A549 (cell line): ENCODE measurements at regions of chr9 and their contacts with region 1.

Region 1: GRCh38 chr9:136820971-136821825 is 13.4 kb downstream of the RABL6 start:
- DNase-seq: no peak
- ATAC-seq: no peak
- H3K4me3 ChIP-seq: no peak overlapping the region
- H3K27ac ChIP-seq: no peak overlapping the region
- H3K4me1 ChIP-seq: no peaks in the 10 kb centered on the region
- CTCF ChIP-seq: no peak
- EP300 ChIP-seq: no peak
- POLR2A ChIP-seq: no peak
- RAD21 ChIP-seq: no peak

Region 2: GRCh38 chr9:135726138-135726853 is 1094.9 kb before region 1 on chr9:
- CTCF ChIA-PET with region 1: no interaction called
- POLR2A ChIA-PET with region 1: no interaction called
- DNase-seq: no peak
- ATAC-seq: peak in 1 of 2 experiments; percentile 24; a peak in 1 of 6 replicates
- H3K4me3 ChIP-seq: no peak overlapping the region
- H3K27ac ChIP-seq: peak overlapping the region in 1 of 2 experiments; percentile 74; a peak in 3 of 6 replicates
- H3K4me1 ChIP-seq: peaks cover 12% of the 10 kb centered on the region; the same call in 1 of the 3 replicates
- CTCF ChIP-seq: no peak
- EP300 ChIP-seq: no peak
- POLR2A ChIP-seq: no peak
- RAD21 ChIP-seq: no peak

Region 3: DNA sequence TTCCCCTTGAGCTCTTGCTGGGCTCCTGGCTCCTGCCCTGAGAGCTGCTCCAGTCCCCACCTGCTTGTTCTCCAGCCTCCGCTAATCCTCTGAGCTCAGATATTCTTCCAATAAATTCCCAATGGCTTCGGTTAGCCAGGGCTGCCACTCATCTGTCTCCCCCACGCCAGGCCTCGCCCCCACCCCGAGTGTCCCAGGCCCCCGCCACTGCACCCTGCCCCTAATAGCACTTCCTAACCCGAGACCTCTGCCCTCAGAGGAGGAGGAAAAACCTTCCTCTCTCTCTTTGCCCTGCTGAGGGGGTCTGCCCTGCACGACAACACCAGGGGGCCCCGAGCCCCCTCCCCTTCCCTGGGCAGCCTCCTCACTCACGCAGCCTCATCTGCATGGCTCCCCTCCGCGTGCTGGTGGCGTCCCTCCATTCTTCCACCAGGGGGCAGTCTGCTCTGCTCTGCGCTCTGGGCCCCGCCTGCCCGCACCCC is 51.4 kb before region 1 on chr9:
- CTCF ChIA-PET with region 1: no interaction called
- POLR2A ChIA-PET with region 1: no interaction called
- DNase-seq: peak; percentile 58 to 72
- ATAC-seq: peak; percentile 87 to 89
- H3K4me3 ChIP-seq: peak overlapping the region; percentile 31
- H3K27ac ChIP-seq: peak overlapping the region; percentile 54 to 85; a peak in 5 of 6 replicates
- H3K4me1 ChIP-seq: 0 out of 3 replicates have a peak, but pooled peaks cover 8% of the 10 kb centered on the region
- CTCF ChIP-seq: peak; percentile 56
- EP300 ChIP-seq: no peak
- POLR2A ChIP-seq: no peak
- RAD21 ChIP-seq: peak in 1 of 2 experiments; percentile 34; a peak in 3 of 5 replicates

Region 4: DNA sequence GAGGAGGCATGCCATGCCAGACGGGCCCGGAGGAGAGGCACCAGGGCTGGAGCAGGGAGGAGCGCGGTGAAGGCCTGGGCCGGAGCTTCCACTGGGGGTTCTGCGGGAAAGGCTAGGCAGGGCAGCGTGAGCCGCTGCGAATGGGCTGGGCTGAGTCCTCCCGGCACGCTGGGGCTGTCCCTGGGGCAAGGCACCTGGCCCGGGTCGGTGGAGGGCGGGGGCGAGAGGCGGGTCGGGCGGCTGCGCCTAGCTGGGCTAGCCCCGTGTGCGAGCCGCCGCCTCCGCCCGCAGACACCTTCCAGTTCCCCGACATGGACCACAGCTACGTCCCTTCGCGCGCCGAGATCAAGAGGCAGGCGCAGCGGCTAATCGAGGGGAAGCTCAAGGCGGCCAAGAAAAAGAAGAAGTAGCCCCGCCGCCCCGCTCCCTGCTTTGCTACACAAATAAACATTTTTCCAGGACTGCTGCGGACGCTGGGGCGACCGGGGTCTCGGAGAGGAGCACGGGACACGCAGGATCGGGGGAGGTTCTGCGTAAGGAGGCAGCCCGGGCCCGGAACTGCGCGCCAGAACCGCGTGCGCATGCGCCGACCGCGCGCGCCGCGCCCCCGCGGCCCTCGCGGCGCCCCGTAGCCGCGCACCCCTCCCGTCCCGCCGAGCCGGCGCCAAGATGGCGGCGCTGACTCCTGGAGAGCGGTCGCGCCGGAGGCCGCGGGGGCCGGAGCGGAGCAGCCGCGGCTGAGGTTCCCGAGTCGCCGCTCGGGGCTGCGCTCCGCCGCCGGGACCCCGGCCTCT is 13.7 kb before region 1 on chr9 and contains the start of gene RABL6:
- CTCF ChIA-PET with region 1: interaction called, 15 read pairs
- POLR2A ChIA-PET with region 1: interaction called, 13 read pairs
- DNase-seq: peak; percentile 69 to 91
- ATAC-seq: peak; percentile 80 to 83
- H3K4me3 ChIP-seq: peak within 1 kb of the TSS; percentile 88
- H3K27ac ChIP-seq: peak within 1 kb of the TSS; percentile 95 to 98
- H3K4me1 ChIP-seq: peaks cover 24% of the 10 kb centered on the region
- CTCF ChIP-seq: no peak
- EP300 ChIP-seq: no peak
- POLR2A ChIP-seq: peak; percentile 92
- RAD21 ChIP-seq: no peak
- polyA plus RNA-seq, gene RABL6: 46.8 and 53.5 TPM in 2 replicates